Gastrocnemius medialis (tissue), 4 donors: ENCODE measurements at regions of chr1 and their contacts with region 1.

Region 1: GRCh38 chr1:94801919-94802546 is 18.1 kb upstream of the SLC44A3 start:
- DNase-seq: no peak
- ATAC-seq: peak; percentile 68 to 82
- H3K4me3 ChIP-seq: peak overlapping the region in 1 of 4 donors; percentile 1
- H3K27ac ChIP-seq: peak overlapping the region; percentile 3 to 59 (median 48)
- H3K4me1 ChIP-seq: peaks cover 3 to 8% of the 10 kb centered on the region in 2 donors
- H3K27me3 ChIP-seq: no peaks in the 10 kb centered on the region
- CTCF ChIP-seq: peak in 2 of 5 experiments; percentile 9 to 20
- POLR2A ChIP-seq: no peak

Region 2: DNA sequence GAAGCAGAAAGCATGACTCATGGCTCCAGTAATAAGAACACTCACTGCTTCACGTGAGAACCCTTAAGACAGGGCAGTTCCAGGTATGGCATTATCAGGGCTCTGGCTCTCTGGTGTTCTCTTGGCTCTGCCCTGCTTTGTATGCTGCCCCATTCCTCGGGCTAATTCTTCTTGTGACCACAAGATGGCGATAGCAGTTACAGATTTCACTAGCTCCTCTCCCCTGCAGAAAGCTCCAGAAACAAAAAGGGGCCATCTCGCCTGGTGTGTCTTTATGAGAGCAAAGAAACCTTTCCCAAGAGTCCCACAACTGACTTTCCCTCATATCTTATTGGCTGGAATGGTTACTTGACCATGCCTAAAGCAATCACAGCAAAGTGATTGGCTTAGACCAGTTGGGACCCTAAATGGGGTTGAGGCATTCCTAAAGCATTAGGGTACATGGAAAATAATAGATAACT is 320.5 kb before region 1 on chr1:
- in situ Hi-C with region 1: loop called in 3 of 4 experiments (anchors 5 to 10 kb)
- intact Hi-C with region 1: loop called (anchors 1 kb)
- DNase-seq: peak; percentile 9 to 32
- ATAC-seq: peak; percentile 54 to 87
- H3K4me3 ChIP-seq: no peak overlapping the region
- H3K27ac ChIP-seq: no peak overlapping the region
- H3K4me1 ChIP-seq: no peaks in the 10 kb centered on the region
- H3K27me3 ChIP-seq: no peaks in the 10 kb centered on the region
- CTCF ChIP-seq: peak; percentile 48 to 80 (median 63)
- POLR2A ChIP-seq: no peak

Region 3: GRCh38 chr1:94522304-94522703 is 279.7 kb before region 1 on chr1:
- in situ Hi-C with region 1: loop called in 3 of 4 experiments (anchors 5 to 10 kb)
- intact Hi-C with region 1: loop called (anchors 2 kb)
- DNase-seq: no peak
- ATAC-seq: peak in 1 of 2 donors; percentile 19
- H3K4me3 ChIP-seq: no peak overlapping the region
- H3K27ac ChIP-seq: no peak overlapping the region
- H3K4me1 ChIP-seq: no peaks in the 10 kb centered on the region
- H3K27me3 ChIP-seq: no peaks in the 10 kb centered on the region
- CTCF ChIP-seq: peak in 1 of 5 experiments; percentile 25
- POLR2A ChIP-seq: no peak

Region 4: GRCh38 chr1:94541175-94542087 is 260.6 kb before region 1 on chr1 and contains the start of gene F3:
- in situ Hi-C with region 1: no loop called
- intact Hi-C with region 1: loop called (anchors 5 kb)
- DNase-seq: peak; percentile 67 to 77
- ATAC-seq: peak; percentile 64 to 70
- H3K4me3 ChIP-seq: peak within 1 kb of the TSS; percentile 54 to 76 (median 62)
- H3K27ac ChIP-seq: peak within 1 kb of the TSS; percentile 76 to 80 (median 79)
- H3K4me1 ChIP-seq: peaks cover 5 to 26% of the 10 kb centered on the region in 2 donors
- H3K27me3 ChIP-seq: peaks cover 28 to 46% (median 36%) of the 10 kb centered on the region in 3 donors
- CTCF ChIP-seq: no peak
- POLR2A ChIP-seq: peak; percentile 53 to 69
- total RNA-seq, gene F3: 3.1 to 10.8 (median 6.3) TPM

Region 5: GRCh38 chr1:94634977-94635416 is 167.0 kb before region 1 on chr1:
- in situ Hi-C with region 1: no loop called
- intact Hi-C with region 1: loop called (anchors 5 kb)
- DNase-seq: no peak
- ATAC-seq: peak; percentile 56 to 58
- H3K4me3 ChIP-seq: no peak overlapping the region
- H3K27ac ChIP-seq: peak overlapping the region in 2 of 4 donors; percentile 37 to 54
- H3K4me1 ChIP-seq: no peaks in the 10 kb centered on the region
- H3K27me3 ChIP-seq: no peaks in the 10 kb centered on the region
- CTCF ChIP-seq: no peak
- POLR2A ChIP-seq: no peak